Aorta (tissue), 5 donors: ENCODE measurements at regions of chr17 and their contacts with region 1.

Region 1: GRCh38 chr17:10618202-10618635 is 38.9 kb downstream of the MYH3 start:
- DNase-seq: peak; percentile 69 to 85
- ATAC-seq: peak; percentile 89
- H3K4me3 ChIP-seq: no peak overlapping the region
- H3K27ac ChIP-seq: no peak overlapping the region
- H3K4me1 ChIP-seq: no peaks in the 10 kb centered on the region
- H3K27me3 ChIP-seq: no peaks in the 10 kb centered on the region

Region 2: GRCh38 chr17:10337976-10338375 is 280.2 kb before region 1 on chr17:
- intact Hi-C with region 1: loop called in 1 of 2 experiments (anchors 10 kb)
- DNase-seq: no peak
- ATAC-seq: no peak
- H3K4me3 ChIP-seq: no peak overlapping the region
- H3K27ac ChIP-seq: no peak overlapping the region
- H3K4me1 ChIP-seq: no peaks in the 10 kb centered on the region
- H3K27me3 ChIP-seq: no peaks in the 10 kb centered on the region

Region 3: GRCh38 chr17:10702574-10702973 is 84.4 kb after region 1 on chr17:
- intact Hi-C with region 1: no loop called
- DNase-seq: no peak
- ATAC-seq: no peak
- H3K4me3 ChIP-seq: no peak overlapping the region
- H3K27ac ChIP-seq: no peak overlapping the region
- H3K4me1 ChIP-seq: no peaks in the 10 kb centered on the region
- H3K27me3 ChIP-seq: no peaks in the 10 kb centered on the region